Left cardiac atrium (tissue), 4 donors: ENCODE measurements at regions of chr9 and their contacts with region 1.

Region 1: DNA sequence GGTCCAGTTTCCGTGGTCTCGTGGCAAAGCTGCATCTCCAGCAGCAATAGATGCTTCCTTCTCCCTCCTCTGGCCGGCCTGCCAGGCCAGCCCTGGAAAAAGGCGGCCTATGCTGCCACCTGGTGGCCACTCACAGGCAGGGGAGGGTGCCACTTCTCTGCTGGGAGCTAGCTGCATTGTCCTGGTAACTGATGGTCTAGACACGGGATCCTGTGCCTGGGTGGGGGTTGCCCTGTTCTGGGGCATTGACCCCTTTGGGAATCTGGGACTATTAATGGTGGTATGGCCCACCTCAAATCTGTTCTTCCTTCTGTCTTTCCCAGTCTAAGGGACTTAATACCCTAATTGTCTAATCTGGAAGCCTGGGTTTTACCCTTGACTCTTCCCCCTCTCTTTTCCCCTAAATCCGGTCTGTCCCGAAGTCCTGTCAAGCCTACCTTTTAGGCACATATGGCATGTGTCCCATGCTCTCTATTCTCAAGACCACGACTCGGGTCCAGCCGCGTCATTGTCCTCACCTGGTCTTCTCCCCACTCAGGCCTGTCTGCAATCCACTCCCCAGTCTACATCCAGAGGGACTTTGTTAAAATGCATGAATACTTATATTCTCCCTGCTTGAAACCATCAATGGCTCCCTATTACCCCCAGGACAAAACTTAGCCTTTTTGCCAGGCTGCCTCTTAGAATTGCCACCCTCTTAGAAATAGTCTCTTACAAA is 20.0 kb upstream of the PTGS1 start:
- DNase-seq: peak; percentile 82
- ATAC-seq: peak; percentile 80 to 81

Region 2: DNA sequence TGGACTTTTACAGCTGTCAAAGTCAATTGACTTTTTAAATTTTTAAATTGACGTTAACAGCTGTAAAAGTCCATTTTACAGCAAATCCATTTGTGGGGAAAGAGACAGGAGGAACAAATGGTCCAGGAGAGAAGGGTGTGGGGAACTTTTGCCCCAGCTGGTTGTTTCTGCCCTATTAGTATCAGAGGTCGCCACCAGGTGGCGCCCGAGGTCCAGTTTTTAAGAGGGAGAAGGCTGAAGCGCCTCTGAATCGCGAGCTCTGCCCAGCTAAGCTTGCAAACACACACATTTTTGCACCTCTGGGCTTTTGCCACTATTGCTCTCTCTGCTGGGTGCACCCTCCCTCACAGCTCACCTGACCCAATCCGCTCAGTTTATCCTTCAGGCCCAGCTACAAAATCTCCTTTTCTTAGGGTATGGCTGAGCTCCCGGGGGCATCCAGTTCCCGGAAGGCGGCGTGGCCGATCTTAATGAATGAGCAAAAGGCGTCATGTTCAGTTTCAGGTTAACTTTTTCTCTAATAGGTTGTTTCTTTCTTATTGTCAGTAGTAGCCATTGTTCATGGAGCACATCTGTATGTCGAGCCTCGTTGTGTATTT is 251.4 kb before region 1 on chr9:
- intact Hi-C with region 1: loop called in 1 of 2 experiments (anchors 1 kb)
- DNase-seq: peak; percentile 87
- ATAC-seq: peak; percentile 83 to 92

Region 3: GRCh38 chr9:122118343-122119165 is 232.2 kb before region 1 on chr9:
- intact Hi-C with region 1: loop called in 1 of 2 experiments (anchors 2 kb)
- DNase-seq: no peak
- ATAC-seq: no peak